ENCODE measurements at regions of chr20 and their contacts with region 1.

Region 1: GRCh38 chr20:63056236-63056948 is 49.6 kb upstream of the BHLHE23 start:
- DNase-seq: peak in 2 of 5 donors; percentile 28 to 62
- H3K4me3 ChIP-seq: no peak overlapping the region
- H3K27ac ChIP-seq: no peak overlapping the region
- H3K4me1 ChIP-seq: no peaks in the 10 kb centered on the region
- H3K27me3 ChIP-seq: no peaks in the 10 kb centered on the region
- CTCF ChIP-seq: peak; percentile 61 to 80 (median 72)
- EP300 ChIP-seq: no peak
- POLR2A ChIP-seq: no peak

Region 2: GRCh38 chr20:63178889-63179686 is 122.7 kb after region 1 on chr20:
- intact Hi-C with region 1: loop called in 1 of 4 experiments (anchors 10 kb)
- DNase-seq: peak in 1 of 5 donors; percentile 34
- H3K4me3 ChIP-seq: no peak overlapping the region
- H3K27ac ChIP-seq: no peak overlapping the region
- H3K4me1 ChIP-seq: peaks cover 14% of the 10 kb centered on the region
- H3K27me3 ChIP-seq: peaks cover 7% of the 10 kb centered on the region
- CTCF ChIP-seq: no peak
- EP300 ChIP-seq: no peak
- POLR2A ChIP-seq: no peak

Region 3: GRCh38 chr20:63230800-63231268 is 174.4 kb after region 1 on chr20:
- intact Hi-C with region 1: loop called in 2 of 4 experiments (anchors 5 to 10 kb)
- DNase-seq: peak; percentile 39 to 77 (median 46)
- H3K4me3 ChIP-seq: no peak overlapping the region
- H3K27ac ChIP-seq: no peak overlapping the region
- H3K4me1 ChIP-seq: no peaks in the 10 kb centered on the region
- H3K27me3 ChIP-seq: no peaks in the 10 kb centered on the region
- CTCF ChIP-seq: peak in 1 of 3 donors; percentile 29
- EP300 ChIP-seq: no peak
- POLR2A ChIP-seq: no peak

Region 4: GRCh38 chr20:63246490-63247288 is 190.3 kb after region 1 on chr20:
- intact Hi-C with region 1: loop called in 1 of 4 experiments (anchors 10 kb)
- DNase-seq: no peak
- H3K4me3 ChIP-seq: no peak overlapping the region
- H3K27ac ChIP-seq: no peak overlapping the region
- H3K4me1 ChIP-seq: no peaks in the 10 kb centered on the region
- H3K27me3 ChIP-seq: no peaks in the 10 kb centered on the region
- CTCF ChIP-seq: no peak
- EP300 ChIP-seq: no peak
- POLR2A ChIP-seq: no peak

Measured in ovary (tissue), 10 donors.